CD14-positive monocyte (primary cell): ENCODE measurements at regions of chr5 and their contacts with region 1.

Region 1: DNA sequence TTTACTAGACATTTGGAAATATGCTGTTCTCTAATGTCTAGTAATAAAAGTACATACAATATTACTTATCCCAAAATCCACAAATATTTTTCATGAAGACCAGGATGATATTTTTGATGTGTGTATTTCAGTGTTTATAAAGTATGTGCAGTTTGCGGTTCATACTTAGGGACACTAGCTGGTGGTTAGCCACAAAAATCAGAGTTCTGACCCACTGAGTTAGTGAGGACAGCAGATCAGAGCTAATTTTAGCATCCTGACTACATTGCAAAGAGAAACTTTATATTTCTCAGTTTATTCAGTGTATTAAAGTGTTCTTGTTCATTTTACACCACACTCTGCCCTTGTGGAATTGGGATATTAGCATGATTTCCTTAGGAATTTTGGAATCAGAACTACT is 655.3 kb downstream of the HTR1A start:
- DNase-seq: no peak
- H3K4me3 ChIP-seq: no peak overlapping the region
- H3K4me3 Mint-ChIP-seq: no peak overlapping the region
- H3K27ac ChIP-seq: no peak overlapping the region
- H3K27ac Mint-ChIP-seq: no peak overlapping the region
- H3K4me1 ChIP-seq: no peaks in the 10 kb centered on the region
- H3K4me1 Mint-ChIP-seq: no peaks in the 10 kb centered on the region
- H3K27me3 ChIP-seq: no peaks in the 10 kb centered on the region
- H3K27me3 Mint-ChIP-seq: peaks cover 0 to 2% (median 0%) of the 10 kb centered on the region in 3 donors
- CTCF ChIP-seq: no peak

Region 2: DNA sequence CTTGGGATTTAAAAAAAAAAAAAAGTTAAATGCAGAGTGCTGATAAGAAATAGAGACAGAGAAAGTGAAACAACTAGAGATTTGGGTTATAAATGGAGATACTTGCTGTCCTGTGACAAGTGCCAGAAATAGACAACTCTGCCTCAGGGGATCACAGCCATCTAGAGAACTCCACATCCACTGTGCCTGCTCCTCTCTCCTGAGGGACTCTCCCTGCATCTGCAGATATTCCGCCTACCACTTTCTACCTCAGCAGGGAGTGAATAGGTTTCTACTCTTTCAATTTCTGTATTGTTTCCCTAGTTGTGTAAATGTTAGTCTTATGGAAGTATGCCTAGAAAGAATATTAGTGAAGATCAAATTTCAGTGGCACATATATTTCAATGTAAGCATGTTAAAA is 348.1 kb after region 1 on chr5:
- intact Hi-C with region 1: loop called in 1 of 2 experiments (anchors 5 kb)
- DNase-seq: no peak
- H3K4me3 ChIP-seq: no peak overlapping the region
- H3K4me3 Mint-ChIP-seq: no peak overlapping the region
- H3K27ac ChIP-seq: no peak overlapping the region
- H3K27ac Mint-ChIP-seq: no peak overlapping the region
- H3K4me1 ChIP-seq: no peaks in the 10 kb centered on the region
- H3K4me1 Mint-ChIP-seq: no peaks in the 10 kb centered on the region
- H3K27me3 ChIP-seq: no peaks in the 10 kb centered on the region
- H3K27me3 Mint-ChIP-seq: peaks cover 0 to 2% (median 0%) of the 10 kb centered on the region in 3 donors
- CTCF ChIP-seq: no peak